CD4-positive, alpha-beta T cell (primary cell): ENCODE measurements at regions of chr2 and their contacts with region 1.

Region 1: GRCh38 chr2:136255648-136256463 is 137.9 kb upstream of the CXCR4 start:
- DNase-seq: peak in 11 of 14 experiments; percentile 13 to 62 (median 37)
- ATAC-seq: peak; percentile 94
- H3K4me3 ChIP-seq: no peak overlapping the region
- H3K4me3 Mint-ChIP-seq: no peak overlapping the region
- H3K27ac ChIP-seq: no peak overlapping the region
- H3K27ac Mint-ChIP-seq: peak overlapping the region; percentile 12
- H3K4me1 ChIP-seq: no peaks in the 10 kb centered on the region
- H3K4me1 Mint-ChIP-seq: peaks cover 26% of the 10 kb centered on the region
- H3K27me3 ChIP-seq: no peaks in the 10 kb centered on the region
- H3K27me3 Mint-ChIP-seq: no peaks in the 10 kb centered on the region
- CTCF ChIP-seq: peak; percentile 45

Region 2: GRCh38 chr2:135925571-135925970 is 330.3 kb before region 1 on chr2:
- CTCF ChIA-PET with region 1: no interaction called
- POLR2A ChIA-PET with region 1: no interaction called
- intact Hi-C with region 1: loop called in 1 of 2 experiments (anchors 10 kb)
- DNase-seq: no peak
- ATAC-seq: no peak
- H3K4me3 ChIP-seq: no peak overlapping the region
- H3K4me3 Mint-ChIP-seq: no peak overlapping the region
- H3K27ac ChIP-seq: no peak overlapping the region
- H3K27ac Mint-ChIP-seq: no peak overlapping the region
- H3K4me1 ChIP-seq: no peaks in the 10 kb centered on the region
- H3K4me1 Mint-ChIP-seq: no peaks in the 10 kb centered on the region
- H3K27me3 ChIP-seq: no peaks in the 10 kb centered on the region
- H3K27me3 Mint-ChIP-seq: no peaks in the 10 kb centered on the region
- CTCF ChIP-seq: no peak

Region 3: GRCh38 chr2:136378712-136379595 is 123.1 kb after region 1 on chr2:
- CTCF ChIA-PET with region 1: no interaction called
- POLR2A ChIA-PET with region 1: interaction called, 3 read pairs
- intact Hi-C with region 1: loop called (anchors 5 kb)
- DNase-seq: peak; percentile 63 to 88 (median 76)
- ATAC-seq: peak; percentile 35
- H3K4me3 ChIP-seq: no peak overlapping the region
- H3K4me3 Mint-ChIP-seq: peak overlapping the region; percentile 31
- H3K27ac ChIP-seq: no peak overlapping the region
- H3K27ac Mint-ChIP-seq: peak overlapping the region; percentile 80
- H3K4me1 ChIP-seq: peaks cover 43% of the 10 kb centered on the region
- H3K4me1 Mint-ChIP-seq: peaks cover 72% of the 10 kb centered on the region
- H3K27me3 ChIP-seq: no peaks in the 10 kb centered on the region
- H3K27me3 Mint-ChIP-seq: no peaks in the 10 kb centered on the region
- CTCF ChIP-seq: peak; percentile 78